BJ (cell line): ENCODE measurements at regions of chr10 and their contacts with region 1.

Region 1: GRCh38 chr10:124296121-124296812 is 122.5 kb downstream of the OAT start:
- DNase-seq: peak; percentile 61
- H3K4me3 ChIP-seq: no peak overlapping the region
- H3K27me3 ChIP-seq: no peaks in the 10 kb centered on the region
- CTCF ChIP-seq: peak; percentile 40

Region 2: GRCh38 chr10:124106241-124106879 is 189.9 kb before region 1 on chr10:
- CTCF ChIA-PET with region 1: no interaction called
- POLR2A ChIA-PET with region 1: no interaction called
- DNase-seq: peak; percentile 73
- H3K4me3 ChIP-seq: no peak overlapping the region
- H3K27me3 ChIP-seq: peaks cover 2% of the 10 kb centered on the region; the same call in 1 of the 2 replicates
- CTCF ChIP-seq: no peak

Region 3: DNA sequence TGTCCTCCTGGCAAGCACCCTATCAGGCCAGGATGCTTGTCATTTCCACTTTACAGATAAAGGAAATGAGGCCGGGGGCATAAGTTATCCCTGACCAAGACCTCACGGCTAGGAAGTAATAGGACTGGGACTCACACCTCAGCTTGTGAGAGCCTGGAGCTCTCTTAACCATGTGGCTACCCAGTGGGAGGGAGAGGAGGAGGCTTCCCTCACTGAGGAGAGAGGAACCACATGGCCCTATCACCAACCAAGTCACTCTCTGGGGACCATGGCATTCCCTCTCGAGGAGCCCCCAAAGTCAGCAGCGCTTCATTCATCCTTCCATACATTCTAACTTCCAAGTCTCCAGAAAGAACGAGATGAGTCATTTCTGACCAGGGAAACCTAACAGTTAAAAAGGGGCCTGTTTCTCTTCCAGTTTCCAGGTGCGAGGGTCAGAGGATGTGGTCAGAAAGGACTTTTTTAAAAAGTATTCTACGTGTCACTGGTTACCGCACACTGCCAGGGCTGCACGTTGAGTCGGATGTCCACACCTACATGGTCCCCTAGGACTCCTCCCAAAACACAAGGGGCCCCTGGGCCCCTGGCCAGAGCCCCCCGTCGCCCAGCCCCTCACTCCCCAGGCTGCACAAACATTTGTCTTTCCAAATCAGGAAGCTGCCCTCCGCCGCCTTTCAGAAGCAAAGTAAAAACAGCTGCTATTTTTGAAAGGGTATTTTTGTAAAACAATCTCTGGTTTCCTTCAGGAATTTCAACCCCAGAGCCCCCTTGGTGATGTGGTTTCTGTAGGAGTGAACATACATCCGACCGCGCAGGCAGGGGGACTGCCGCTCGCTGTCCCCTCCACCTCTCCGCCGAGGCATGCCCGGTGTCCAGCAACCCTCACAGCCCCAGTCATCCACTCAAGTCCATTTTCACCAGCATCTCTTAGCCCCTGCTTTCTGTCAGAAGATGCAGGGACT is 74.6 kb before region 1 on chr10:
- CTCF ChIA-PET with region 1: no interaction called
- POLR2A ChIA-PET with region 1: no interaction called
- DNase-seq: no peak
- H3K4me3 ChIP-seq: no peak overlapping the region
- H3K27me3 ChIP-seq: no peaks in the 10 kb centered on the region
- CTCF ChIP-seq: no peak

Region 4: DNA sequence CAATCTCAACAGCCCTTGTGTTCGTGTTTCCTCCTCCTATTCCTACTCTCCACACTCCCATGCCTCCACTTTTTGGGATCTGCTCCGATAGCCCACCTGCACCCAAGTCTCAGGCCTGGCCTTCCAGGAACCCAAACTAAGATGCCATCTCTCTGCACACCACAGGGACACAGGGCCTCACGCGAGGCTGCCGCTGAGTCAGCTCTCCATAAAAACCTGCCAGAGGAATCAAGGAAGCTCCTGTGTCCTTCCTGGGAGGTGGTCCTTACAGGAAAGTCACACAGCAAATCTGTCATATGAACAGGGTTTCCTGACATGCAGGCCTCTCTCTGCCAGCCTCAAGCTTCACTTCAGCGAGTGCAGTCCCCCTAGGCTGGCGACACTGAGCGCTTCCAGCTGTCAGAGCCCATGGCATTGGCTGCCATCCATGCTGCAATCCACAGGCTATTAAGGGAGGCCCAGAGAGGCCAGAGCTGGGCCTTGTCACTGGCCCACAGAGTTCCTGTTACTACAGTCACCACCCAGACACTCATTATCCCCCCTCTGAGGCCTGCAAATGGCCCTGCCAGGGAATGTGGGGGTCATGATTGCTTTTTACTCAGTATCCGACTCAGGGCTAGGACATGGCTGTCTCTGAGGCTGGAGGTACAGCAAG is 28.9 kb before region 1 on chr10:
- CTCF ChIA-PET with region 1: no interaction called
- POLR2A ChIA-PET with region 1: no interaction called
- DNase-seq: no peak
- H3K4me3 ChIP-seq: no peak overlapping the region
- H3K27me3 ChIP-seq: no peaks in the 10 kb centered on the region
- CTCF ChIP-seq: no peak

Region 5: GRCh38 chr10:124394583-124394982 is 98.3 kb after region 1 on chr10:
- CTCF ChIA-PET with region 1: interaction called, 38 read pairs
- POLR2A ChIA-PET with region 1: no interaction called
- DNase-seq: no peak
- H3K4me3 ChIP-seq: no peak overlapping the region
- H3K27me3 ChIP-seq: no peaks in the 10 kb centered on the region
- CTCF ChIP-seq: no peak